ENCODE measurements at regions of chr17 and their contacts with region 1.

Region 1: GRCh38 chr17:79074650-79075445 is at the start of gene ENGASE:
- DNase-seq: peak; percentile 98
- ATAC-seq: peak; percentile 99
- total RNA-seq, gene ENGASE: 29.1 TPM

Region 2: GRCh38 chr17:79019632-79020584 is 54.9 kb before region 1 on chr17:
- intact Hi-C with region 1: loop called (anchors 5 kb)
- DNase-seq: peak; percentile 81
- ATAC-seq: peak; percentile 35

Measured in Right ventricle myocardium superior (tissue), 1 donor.